ENCODE measurements at regions of chr5 and their contacts with region 1.

Region 1: GRCh38 chr5:112174959-112175594 is 244.0 kb downstream of the EPB41L4A start:
- DNase-seq: no peak
- H3K4me3 ChIP-seq: no peak overlapping the region
- CTCF ChIP-seq: peak; percentile 30

Region 2: GRCh38 chr5:112160652-112161391 is 14.3 kb before region 1 on chr5:
- CTCF ChIA-PET with region 1: interaction called, 40 read pairs
- POLR2A ChIA-PET with region 1: interaction called, 4 read pairs
- DNase-seq: peak; percentile 40
- H3K4me3 ChIP-seq: peak overlapping the region; percentile 95
- CTCF ChIP-seq: peak; percentile 100

Region 3: DNA sequence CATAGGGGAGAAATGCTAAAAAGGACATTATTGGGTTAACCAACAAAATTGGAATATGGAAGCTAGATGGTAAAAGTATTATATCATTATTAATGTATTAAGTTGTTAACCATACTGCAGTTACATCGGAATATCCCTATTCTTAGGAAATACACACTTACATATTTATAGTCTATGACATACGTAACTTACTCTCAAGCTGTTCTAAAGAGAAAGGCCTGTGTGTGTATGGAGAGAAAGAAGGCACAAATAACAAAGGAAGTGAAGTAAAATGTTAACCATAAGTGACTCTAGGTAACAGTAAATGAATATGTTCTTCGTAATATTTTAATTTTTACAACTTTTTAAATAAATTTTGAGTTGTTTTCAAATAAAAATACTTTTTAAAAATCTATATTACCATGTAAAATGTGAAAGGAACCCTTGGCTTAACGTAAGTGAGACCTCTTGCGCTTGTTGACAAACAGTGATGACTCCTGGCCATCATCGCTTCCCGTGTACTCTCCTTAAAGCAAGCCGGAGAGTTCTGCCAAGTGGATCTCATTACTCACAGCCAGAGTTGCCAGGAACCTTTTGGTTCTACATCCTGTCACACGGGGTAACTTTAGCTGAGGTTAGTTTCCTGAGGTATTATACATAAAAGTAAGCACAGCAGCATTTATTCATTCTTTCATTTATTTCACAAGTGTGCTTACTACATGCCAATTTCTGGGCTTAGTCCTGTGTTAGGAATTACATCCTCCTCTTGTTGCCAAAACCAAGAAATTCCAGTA is 78.6 kb after region 1 on chr5:
- CTCF ChIA-PET with region 1: no interaction called
- POLR2A ChIA-PET with region 1: no interaction called
- DNase-seq: no peak
- H3K4me3 ChIP-seq: no peak overlapping the region
- CTCF ChIP-seq: no peak

Region 4: DNA sequence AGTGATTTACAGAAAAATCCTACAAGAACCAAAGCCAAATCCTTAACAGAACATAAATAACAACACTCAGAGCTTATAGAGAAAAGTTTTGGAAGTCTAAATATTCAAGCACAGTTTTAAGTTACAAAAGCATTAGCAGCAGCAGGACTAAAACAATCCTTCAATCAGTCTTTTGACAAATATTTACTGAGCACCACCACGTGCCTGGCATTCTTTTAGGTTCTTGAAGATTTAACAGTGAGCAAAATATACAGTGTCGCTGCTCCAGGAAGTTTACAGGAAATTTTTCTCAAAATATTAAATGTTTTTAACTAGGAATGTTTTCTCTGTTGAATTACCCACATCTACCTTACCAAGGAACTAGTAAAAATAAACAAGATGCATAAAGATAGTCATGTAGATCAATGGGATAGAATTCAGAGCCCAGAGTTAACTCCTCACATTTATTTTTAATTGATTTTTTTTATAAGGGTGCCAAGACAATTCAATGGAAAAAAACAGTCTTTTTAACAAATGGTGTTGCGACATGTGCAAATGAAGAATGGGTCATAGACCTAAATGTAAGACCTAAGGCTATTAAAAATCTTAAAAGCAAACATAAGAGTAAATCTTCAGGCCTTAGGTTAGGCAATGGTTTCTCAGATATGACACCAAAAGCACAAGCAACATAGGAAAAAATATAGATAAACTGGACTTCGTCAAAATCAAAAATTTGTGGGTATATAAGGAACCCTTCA is 232.8 kb after region 1 on chr5:
- CTCF ChIA-PET with region 1: no interaction called
- POLR2A ChIA-PET with region 1: no interaction called
- DNase-seq: no peak
- H3K4me3 ChIP-seq: no peak overlapping the region
- CTCF ChIP-seq: no peak

Region 5: GRCh38 chr5:112419986-112420864 is 245.1 kb after region 1 on chr5:
- CTCF ChIA-PET with region 1: interaction called, 10 read pairs
- POLR2A ChIA-PET with region 1: no interaction called
- DNase-seq: no peak
- H3K4me3 ChIP-seq: peak overlapping the region; percentile 54
- CTCF ChIP-seq: peak; percentile 79

Region 6: GRCh38 chr5:113606298-113607134 is 1431.4 kb after region 1 on chr5:
- CTCF ChIA-PET with region 1: interaction called, 16 read pairs
- POLR2A ChIA-PET with region 1: no interaction called
- DNase-seq: no peak
- H3K4me3 ChIP-seq: no peak overlapping the region
- CTCF ChIP-seq: peak; percentile 61

Measured in AG04449 (cell line).